ENCODE measurements at regions of chr3 and their contacts with region 1.

Region 1: DNA sequence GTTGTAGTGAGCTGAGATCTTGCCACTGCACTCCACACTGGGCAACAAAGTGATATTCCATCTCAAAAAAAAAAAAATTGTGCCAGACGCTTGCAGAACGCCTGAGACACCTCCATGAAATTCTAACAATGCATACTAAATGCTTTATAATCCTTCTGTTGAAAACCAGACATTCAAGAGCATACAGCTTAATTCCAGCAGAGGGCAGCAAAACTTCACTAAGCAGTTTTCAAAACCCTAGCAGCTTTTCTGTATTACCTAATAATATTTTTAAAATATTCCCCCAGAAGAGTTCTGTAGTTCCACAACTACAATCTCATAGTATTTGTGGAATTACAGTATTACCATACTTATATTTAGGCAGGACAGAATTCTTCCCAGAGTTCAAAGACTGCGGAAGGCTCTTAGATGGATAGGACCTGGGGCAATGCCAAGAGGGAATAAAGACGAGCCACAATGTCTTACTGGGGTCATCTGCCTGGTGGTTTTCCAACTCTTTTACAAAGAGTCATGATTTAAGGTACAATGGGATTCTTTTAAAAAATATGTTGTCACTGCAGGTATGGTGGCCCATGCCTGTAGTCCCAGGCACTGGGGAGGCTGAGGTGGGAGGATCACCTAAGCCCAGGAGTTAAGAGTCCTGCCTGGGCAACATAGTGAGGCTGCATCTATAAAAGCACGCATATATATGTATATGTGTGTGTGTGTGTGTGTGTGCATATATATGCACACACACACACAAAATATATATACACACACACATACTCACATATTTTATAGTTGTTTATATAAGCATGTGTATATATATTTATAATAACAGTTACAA is 19.6 kb upstream of the TASOR start:
- ATAC-seq: peak in 7 of 8 experiments; percentile 40 to 86 (median 71)
- H3K4me3 ChIP-seq: no peak overlapping the region
- H3K27ac ChIP-seq: no peak overlapping the region
- H3K4me1 ChIP-seq: no peaks in the 10 kb centered on the region

Region 2: DNA sequence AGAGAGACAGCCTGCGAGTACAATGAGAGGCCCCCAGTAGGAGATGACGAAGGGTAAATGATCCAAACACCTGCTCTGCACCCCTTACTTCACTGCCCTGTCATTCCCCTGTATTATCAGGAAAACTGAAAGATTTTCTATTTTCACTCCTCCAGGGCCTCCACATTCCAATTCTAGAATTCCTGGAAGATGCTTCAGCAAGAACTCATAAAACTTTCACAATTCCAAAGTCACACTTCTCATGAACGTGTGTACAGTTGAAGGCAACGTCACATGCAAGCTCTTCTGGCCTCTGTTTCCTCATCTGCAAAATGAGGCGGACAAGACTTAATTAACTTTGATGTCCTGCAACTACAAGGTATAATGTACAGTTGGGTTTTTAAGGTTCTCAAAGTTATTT is 295.0 kb after region 1 on chr3:
- in situ Hi-C with region 1: loop called in 4 of 9 experiments (anchors 10 to 25 kb)
- ATAC-seq: peak in 2 of 8 experiments; percentile 33 to 55
- H3K4me3 ChIP-seq: no peak overlapping the region
- H3K27ac ChIP-seq: no peak overlapping the region
- H3K4me1 ChIP-seq: peaks cover 0 to 6% of the 10 kb centered on the region in 2 donors